Left ventricle myocardium inferior (tissue), 1 donor: ENCODE measurements at regions of chr9 and their contacts with region 1.

Region 1: GRCh38 chr9:96449845-96450612 is at the start of gene HABP4:
- DNase-seq: peak; percentile 97
- H3K4me3 ChIP-seq: peak within 1 kb of the TSS; percentile 81
- H3K27ac ChIP-seq: peak within 1 kb of the TSS; percentile 89
- H3K4me1 ChIP-seq: peaks cover 31% of the 10 kb centered on the region
- H3K27me3 ChIP-seq: no peaks in the 10 kb centered on the region
- CTCF ChIP-seq: peak; percentile 13
- total RNA-seq, gene HABP4: 23.1 TPM

Region 2: GRCh38 chr9:96344458-96345180 is 105.4 kb before region 1 on chr9:
- intact Hi-C with region 1: loop called (anchors 10 kb)
- DNase-seq: peak; percentile 19
- H3K4me3 ChIP-seq: no peak overlapping the region
- H3K27ac ChIP-seq: peak overlapping the region; percentile 68
- H3K4me1 ChIP-seq: peaks cover 27% of the 10 kb centered on the region
- H3K27me3 ChIP-seq: no peaks in the 10 kb centered on the region
- CTCF ChIP-seq: no peak

Region 3: GRCh38 chr9:96486368-96487028 is 36.5 kb after region 1 on chr9:
- intact Hi-C with region 1: no loop called
- DNase-seq: peak; percentile 79
- H3K4me3 ChIP-seq: peak overlapping the region; percentile 32
- H3K27ac ChIP-seq: peak overlapping the region; percentile 74
- H3K4me1 ChIP-seq: peaks cover 41% of the 10 kb centered on the region
- H3K27me3 ChIP-seq: no peaks in the 10 kb centered on the region
- CTCF ChIP-seq: no peak

Region 4: GRCh38 chr9:96566498-96567207 is 116.6 kb after region 1 on chr9:
- intact Hi-C with region 1: loop called (anchors 10 kb)
- DNase-seq: peak; percentile 82
- H3K4me3 ChIP-seq: peak overlapping the region; percentile 91
- H3K27ac ChIP-seq: peak overlapping the region; percentile 93
- H3K4me1 ChIP-seq: peaks cover 42% of the 10 kb centered on the region
- H3K27me3 ChIP-seq: no peaks in the 10 kb centered on the region
- CTCF ChIP-seq: peak; percentile 80